ENCODE measurements at regions of chr11 and their contacts with region 1.

Region 1: GRCh38 chr11:101866619-101867491 is 48.0 kb upstream of the CEP126 start:
- DNase-seq: peak; percentile 89 to 91
- H3K4me3 ChIP-seq: no peak overlapping the region
- H3K4me3 Mint-ChIP-seq: peak overlapping the region; percentile 31
- H3K27ac Mint-ChIP-seq: peak overlapping the region; percentile 79
- H3K4me1 ChIP-seq: peaks cover 50% of the 10 kb centered on the region
- H3K4me1 Mint-ChIP-seq: peaks cover 34% of the 10 kb centered on the region
- H3K27me3 ChIP-seq: no peaks in the 10 kb centered on the region
- H3K27me3 Mint-ChIP-seq: no peaks in the 10 kb centered on the region
- CTCF ChIP-seq: no peak

Region 2: GRCh38 chr11:101211407-101211975 is 655.4 kb before region 1 on chr11:
- CTCF ChIA-PET with region 1: no interaction called
- POLR2A ChIA-PET with region 1: no interaction called
- intact Hi-C with region 1: loop called (anchors 5 kb)
- DNase-seq: peak; percentile 72 to 76
- H3K4me3 ChIP-seq: no peak overlapping the region
- H3K4me3 Mint-ChIP-seq: no peak overlapping the region
- H3K27ac Mint-ChIP-seq: peak overlapping the region; percentile 51
- H3K4me1 ChIP-seq: peaks cover 25% of the 10 kb centered on the region
- H3K4me1 Mint-ChIP-seq: no peaks in the 10 kb centered on the region
- H3K27me3 ChIP-seq: no peaks in the 10 kb centered on the region
- H3K27me3 Mint-ChIP-seq: no peaks in the 10 kb centered on the region
- CTCF ChIP-seq: no peak

Region 3: GRCh38 chr11:101880222-101880621 is 13.4 kb after region 1 on chr11:
- CTCF ChIA-PET with region 1: interaction called, 50 read pairs
- POLR2A ChIA-PET with region 1: no interaction called
- intact Hi-C with region 1: loop called (anchors 1 kb)
- DNase-seq: peak; percentile 42 to 77
- H3K4me3 ChIP-seq: no peak overlapping the region
- H3K4me3 Mint-ChIP-seq: no peak overlapping the region
- H3K27ac Mint-ChIP-seq: no peak overlapping the region
- H3K4me1 ChIP-seq: peaks cover 8% of the 10 kb centered on the region
- H3K4me1 Mint-ChIP-seq: peaks cover 11% of the 10 kb centered on the region
- H3K27me3 ChIP-seq: no peaks in the 10 kb centered on the region
- H3K27me3 Mint-ChIP-seq: no peaks in the 10 kb centered on the region
- CTCF ChIP-seq: peak; percentile 66 to 90

Region 4: DNA sequence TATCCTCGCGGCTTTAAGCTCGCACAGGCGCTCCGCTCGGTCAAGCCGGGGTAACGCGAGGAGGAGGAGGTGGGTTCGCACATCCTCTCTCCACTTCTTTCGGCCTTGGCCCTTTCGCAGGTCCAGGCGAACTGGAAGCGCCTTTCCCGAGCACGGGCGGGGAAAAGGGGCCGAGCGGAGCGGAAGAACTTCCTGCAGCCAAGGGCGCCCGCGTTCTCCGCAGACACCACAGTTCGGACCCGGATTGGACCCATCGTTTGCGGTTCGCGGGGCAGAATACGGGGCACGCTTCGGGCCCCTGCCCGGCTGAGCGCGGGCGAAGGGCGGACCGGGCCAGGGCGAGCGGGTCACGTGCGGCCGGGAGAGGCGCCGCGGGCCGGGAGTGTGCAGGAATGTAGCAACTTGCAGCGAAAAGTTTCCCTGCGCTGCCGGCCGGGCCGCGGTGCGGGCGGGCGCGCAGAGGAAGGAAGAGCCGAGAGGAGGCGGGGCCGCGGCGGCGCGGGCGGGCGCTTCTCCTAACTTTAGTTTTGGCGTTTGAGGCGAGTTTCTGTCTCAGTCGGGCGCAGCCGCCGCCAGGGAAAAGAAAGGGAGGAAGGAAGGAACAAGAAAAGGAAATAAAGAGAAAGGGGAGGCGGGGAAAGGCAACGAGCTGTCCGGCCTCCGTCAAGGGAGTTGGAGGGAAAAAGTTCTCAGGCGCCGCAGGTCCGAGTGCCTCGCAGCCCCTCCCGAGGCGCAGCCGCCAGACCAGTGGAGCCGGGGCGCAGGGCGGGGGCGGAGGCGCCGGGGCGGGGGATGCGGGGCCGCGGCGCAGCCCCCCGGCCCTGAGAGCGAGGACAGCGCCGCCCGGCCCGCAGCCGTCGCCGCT is 243.3 kb after region 1 on chr11 and contains the start of gene YAP1:
- CTCF ChIA-PET with region 1: no interaction called
- POLR2A ChIA-PET with region 1: no interaction called
- intact Hi-C with region 1: loop called (anchors 2 kb)
- DNase-seq: peak; percentile 97 to 99
- H3K4me3 ChIP-seq: peak within 1 kb of the TSS; percentile 96
- H3K4me3 Mint-ChIP-seq: peak within 1 kb of the TSS; percentile 91
- H3K27ac Mint-ChIP-seq: peak within 1 kb of the TSS; percentile 98
- H3K4me1 ChIP-seq: peaks cover 20% of the 10 kb centered on the region
- H3K4me1 Mint-ChIP-seq: peaks cover 16% of the 10 kb centered on the region
- H3K27me3 ChIP-seq: no peaks in the 10 kb centered on the region
- H3K27me3 Mint-ChIP-seq: no peaks in the 10 kb centered on the region
- CTCF ChIP-seq: no peak
- total RNA-seq, gene YAP1: 207 and 227 TPM in 2 replicates

Region 5: GRCh38 chr11:102346748-102347461 is 480.1 kb after region 1 on chr11 and contains the start of gene BIRC2:
- CTCF ChIA-PET with region 1: no interaction called
- POLR2A ChIA-PET with region 1: no interaction called
- intact Hi-C with region 1: no loop called
- DNase-seq: peak; percentile 96 to 100
- H3K4me3 ChIP-seq: peak within 1 kb of the TSS; percentile 52
- H3K4me3 Mint-ChIP-seq: peak within 1 kb of the TSS; percentile 93
- H3K27ac Mint-ChIP-seq: peak within 1 kb of the TSS; percentile 68
- H3K4me1 ChIP-seq: peaks cover 17% of the 10 kb centered on the region
- H3K4me1 Mint-ChIP-seq: peaks cover 8% of the 10 kb centered on the region
- H3K27me3 ChIP-seq: no peaks in the 10 kb centered on the region
- H3K27me3 Mint-ChIP-seq: no peaks in the 10 kb centered on the region
- CTCF ChIP-seq: peak; percentile 71 to 97
- total RNA-seq, gene BIRC2: 52.7 and 53.5 TPM in 2 replicates

Region 6: GRCh38 chr11:102599642-102600261 is 732.9 kb after region 1 on chr11:
- CTCF ChIA-PET with region 1: no interaction called
- POLR2A ChIA-PET with region 1: no interaction called
- intact Hi-C with region 1: loop called (anchors 1 kb)
- DNase-seq: peak; percentile 72 to 81
- H3K4me3 ChIP-seq: no peak overlapping the region
- H3K4me3 Mint-ChIP-seq: peak overlapping the region; percentile 61
- H3K27ac Mint-ChIP-seq: peak overlapping the region; percentile 79
- H3K4me1 ChIP-seq: peaks cover 73% of the 10 kb centered on the region
- H3K4me1 Mint-ChIP-seq: peaks cover 63% of the 10 kb centered on the region
- H3K27me3 ChIP-seq: no peaks in the 10 kb centered on the region
- H3K27me3 Mint-ChIP-seq: no peaks in the 10 kb centered on the region
- CTCF ChIP-seq: no peak